OCI-LY7 (cell line): ENCODE measurements at regions of chr3 and their contacts with region 1.

Region 1: DNA sequence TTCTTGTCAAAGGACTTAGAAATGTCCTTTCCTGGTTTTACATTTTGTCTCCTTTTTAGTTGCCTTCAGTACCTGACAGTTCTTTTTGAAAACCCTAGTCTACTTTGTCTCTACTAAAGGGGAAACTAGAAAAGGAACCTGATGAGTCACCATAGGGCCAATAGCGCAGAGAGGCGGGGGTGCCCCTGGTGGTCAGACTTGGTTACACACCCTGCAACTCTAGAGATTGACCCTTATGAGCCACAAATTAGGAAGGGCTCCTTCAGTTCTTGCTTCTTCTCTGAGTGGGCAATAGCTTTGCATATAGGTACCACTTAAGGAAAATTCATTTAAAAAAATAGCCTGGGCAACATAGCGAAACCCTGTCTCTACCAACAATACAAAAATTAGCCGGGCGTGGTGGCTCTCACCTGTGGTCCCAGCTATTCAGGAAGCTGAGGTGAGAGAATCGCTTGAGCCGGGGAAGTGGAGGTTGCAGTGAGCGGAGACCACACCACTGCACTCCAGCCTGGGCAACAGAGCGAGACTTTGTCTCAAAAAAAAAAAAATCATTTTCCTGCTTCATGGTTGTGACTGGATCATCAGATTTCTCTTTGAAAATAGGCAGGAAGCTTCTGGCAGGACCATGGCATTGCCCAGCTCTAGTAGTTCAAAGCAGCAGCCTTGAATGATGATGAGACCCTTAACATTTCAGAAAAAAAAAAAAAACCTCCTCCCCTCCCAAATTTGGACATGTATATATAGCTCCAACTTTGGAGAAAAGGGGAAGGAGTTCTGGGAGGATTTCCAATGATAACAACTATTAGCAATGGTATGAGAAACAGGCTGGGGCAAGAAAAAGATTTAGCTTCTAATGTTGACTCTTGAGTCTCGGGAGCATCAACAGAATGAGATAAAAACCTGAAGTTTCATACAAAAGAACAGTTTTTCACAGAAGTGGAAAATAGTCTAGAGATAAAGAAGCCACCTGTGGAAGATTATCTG is 45.2 kb upstream of the RASA2 start:
- DNase-seq: peak; percentile 76
- H3K4me3 ChIP-seq: no peak overlapping the region
- H3K27ac ChIP-seq: no peak overlapping the region
- H3K4me1 ChIP-seq: peaks cover 12% of the 10 kb centered on the region
- CTCF ChIP-seq: peak; percentile 95

Region 2: DNA sequence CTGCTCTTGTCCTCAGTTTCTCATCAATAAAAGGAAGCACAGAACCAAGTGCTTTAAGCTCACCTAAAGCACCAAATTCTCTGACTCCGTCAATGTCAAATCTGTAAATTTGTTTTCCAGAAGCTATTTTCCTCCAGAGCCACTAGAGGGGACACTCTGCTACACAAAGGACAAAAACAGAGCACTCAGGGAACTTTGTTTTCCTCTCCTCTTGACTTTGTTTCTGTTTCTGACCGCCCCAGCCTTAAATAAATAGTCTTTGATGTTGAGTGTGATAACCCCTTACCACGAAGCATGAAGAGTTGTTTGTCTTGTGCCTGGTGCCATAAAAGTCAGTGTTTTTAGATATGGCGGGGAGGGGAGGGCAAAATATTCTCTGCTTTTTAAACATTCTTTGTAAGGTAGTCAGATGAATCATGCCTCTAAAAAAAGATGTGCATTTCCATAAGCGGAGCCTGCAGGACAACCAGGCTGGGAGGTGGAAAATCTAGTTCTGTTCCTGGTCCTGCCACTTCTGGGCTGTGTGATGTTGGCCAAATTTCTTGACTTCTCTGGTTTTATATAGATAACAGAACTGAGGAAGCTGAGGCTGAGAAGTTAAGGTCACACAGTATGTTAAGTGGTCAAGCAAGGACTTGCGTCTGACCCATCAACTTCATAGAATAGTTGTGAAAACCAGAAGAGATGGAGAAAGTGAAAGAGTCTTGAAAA is 80.6 kb before region 1 on chr3:
- CTCF ChIA-PET with region 1: interaction called, 5 read pairs
- POLR2A ChIA-PET with region 1: no interaction called
- intact Hi-C with region 1: loop called (anchors 2 kb)
- DNase-seq: peak; percentile 71
- H3K4me3 ChIP-seq: peak overlapping the region; percentile 25
- H3K27ac ChIP-seq: no peak overlapping the region
- H3K4me1 ChIP-seq: peaks cover 5% of the 10 kb centered on the region
- CTCF ChIP-seq: peak; percentile 93

Region 3: GRCh38 chr3:141370065-141370533 is 71.6 kb before region 1 on chr3:
- CTCF ChIA-PET with region 1: interaction called, 3 read pairs
- POLR2A ChIA-PET with region 1: interaction called, 3 read pairs
- intact Hi-C with region 1: loop called (anchors 2 kb)
- DNase-seq: peak; percentile 96
- H3K4me3 ChIP-seq: no peak overlapping the region
- H3K27ac ChIP-seq: no peak overlapping the region
- H3K4me1 ChIP-seq: peaks cover 5% of the 10 kb centered on the region
- CTCF ChIP-seq: peak; percentile 87